HEK293 (cell line): ENCODE measurements at regions of chr12 and their contacts with region 1.

Region 1: DNA sequence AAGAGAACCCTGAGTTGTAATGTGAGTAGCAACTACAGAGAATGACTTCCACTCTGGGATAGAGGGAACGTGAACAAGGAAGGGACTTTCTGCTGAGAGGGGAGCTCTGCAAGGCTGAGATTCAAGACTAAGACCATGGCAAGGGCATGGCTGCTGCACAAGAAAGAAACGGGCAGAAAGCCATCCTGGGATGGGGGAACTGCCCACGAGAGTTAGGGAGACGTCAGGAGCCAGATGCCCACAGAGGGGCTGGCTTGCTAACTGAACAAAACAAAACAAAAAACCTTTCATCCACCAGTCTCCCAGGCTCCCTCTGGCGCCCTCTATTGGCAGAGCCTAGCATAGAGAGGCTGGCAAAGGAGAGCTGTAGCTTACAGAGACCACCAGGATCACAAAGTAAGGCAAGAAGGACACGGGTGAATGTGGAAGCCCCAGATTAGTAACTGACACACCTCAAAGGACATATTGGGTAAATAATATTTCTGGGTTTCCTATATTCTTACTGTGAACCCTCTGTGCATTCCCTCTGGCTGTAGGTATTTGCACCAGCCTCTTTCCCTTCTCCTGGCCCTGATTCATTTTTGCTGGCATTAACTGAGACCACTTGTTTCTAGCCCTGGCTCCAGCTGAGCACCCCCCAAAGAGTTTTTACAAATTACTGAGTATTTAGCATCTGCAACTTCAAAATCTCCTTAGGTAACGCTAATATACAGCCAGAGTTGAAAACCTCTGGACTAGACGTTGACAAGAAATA is 338.3 kb downstream of the EMP1 start:
- H3K4me3 ChIP-seq: no peak overlapping the region
- H3K27ac ChIP-seq: no peak overlapping the region
- H3K4me1 ChIP-seq: no peaks in the 10 kb centered on the region
- CTCF ChIP-seq: peak; percentile 70

Region 2: GRCh38 chr12:13255792-13256691 is 278.8 kb before region 1 on chr12:
- CTCF ChIA-PET with region 1: interaction called, 21 read pairs
- POLR2A ChIA-PET with region 1: no interaction called
- H3K4me3 ChIP-seq: peak overlapping the region; percentile 32
- H3K27ac ChIP-seq: no peak overlapping the region
- H3K4me1 ChIP-seq: peaks cover 14% of the 10 kb centered on the region
- CTCF ChIP-seq: peak; percentile 99

Region 3: DNA sequence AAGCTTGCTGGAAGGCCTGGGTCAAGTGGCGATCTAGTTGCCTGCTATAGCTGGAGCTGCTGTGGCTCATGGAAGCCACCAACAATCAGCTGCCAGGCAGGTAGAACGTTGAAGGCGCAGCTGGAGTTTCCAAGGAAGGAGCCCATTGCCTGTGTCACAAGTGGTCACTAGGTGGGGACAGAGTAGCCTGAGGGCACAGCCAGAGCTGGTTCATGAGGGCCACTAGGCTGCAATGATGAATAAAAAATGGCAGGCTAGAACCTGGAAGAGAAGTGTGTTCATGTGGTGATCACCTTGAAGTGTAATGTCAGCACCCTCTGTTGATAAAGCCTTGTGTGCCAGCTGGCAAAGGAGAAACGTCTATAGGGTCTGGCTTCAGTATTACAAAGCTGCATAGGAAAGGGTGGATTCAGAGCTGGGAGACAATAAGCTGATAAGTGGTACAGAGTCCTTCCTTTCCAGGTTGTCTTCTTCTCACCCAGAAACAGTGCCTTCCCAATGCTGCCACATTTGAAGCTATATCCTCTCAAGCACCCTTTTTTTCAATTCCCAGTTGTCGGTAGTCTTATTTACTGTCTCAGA is 172.5 kb before region 1 on chr12:
- CTCF ChIA-PET with region 1: interaction called, 33 read pairs
- POLR2A ChIA-PET with region 1: no interaction called
- H3K4me3 ChIP-seq: no peak overlapping the region
- H3K27ac ChIP-seq: no peak overlapping the region
- H3K4me1 ChIP-seq: no peaks in the 10 kb centered on the region
- CTCF ChIP-seq: peak; percentile 58; the same call in 1 of the 2 replicates

Region 4: DNA sequence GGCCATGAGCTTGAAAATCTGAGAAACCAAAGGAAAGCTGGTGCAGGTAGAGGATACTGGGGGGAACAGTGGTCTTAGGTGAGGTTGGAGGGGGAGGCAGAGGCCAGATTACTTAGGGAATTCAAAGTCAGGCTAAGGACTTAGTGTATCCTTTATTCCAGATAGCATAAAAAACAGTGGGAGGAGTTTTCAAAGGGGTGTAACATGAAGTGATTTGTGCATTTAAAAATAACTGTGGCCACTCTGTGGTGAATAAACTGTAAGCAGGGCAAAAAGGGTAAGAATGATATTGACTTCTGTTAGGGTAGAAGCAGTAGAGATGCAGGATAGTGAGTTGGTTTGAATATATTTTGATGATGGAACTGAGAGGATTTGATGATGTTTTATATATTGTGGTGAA is 25.1 kb before region 1 on chr12:
- CTCF ChIA-PET with region 1: interaction called, 16 read pairs
- POLR2A ChIA-PET with region 1: no interaction called
- H3K4me3 ChIP-seq: no peak overlapping the region
- H3K27ac ChIP-seq: no peak overlapping the region
- H3K4me1 ChIP-seq: no peaks in the 10 kb centered on the region
- CTCF ChIP-seq: no peak

Region 5: GRCh38 chr12:13546231-13546630 is 11.4 kb after region 1 on chr12:
- CTCF ChIA-PET with region 1: interaction called, 29 read pairs
- POLR2A ChIA-PET with region 1: no interaction called
- H3K4me3 ChIP-seq: no peak overlapping the region
- H3K27ac ChIP-seq: no peak overlapping the region
- H3K4me1 ChIP-seq: no peaks in the 10 kb centered on the region
- CTCF ChIP-seq: no peak

Region 6: GRCh38 chr12:13811061-13811460 is 276.2 kb after region 1 on chr12:
- CTCF ChIA-PET with region 1: no interaction called
- POLR2A ChIA-PET with region 1: no interaction called
- H3K4me3 ChIP-seq: no peak overlapping the region
- H3K27ac ChIP-seq: no peak overlapping the region
- H3K4me1 ChIP-seq: no peaks in the 10 kb centered on the region
- CTCF ChIP-seq: no peak